Activated CD4-positive, alpha-beta T cell treated with anti-CD3 and anti-CD28 coated beads, Interleukin-2, amount 10 ng/mL, durations not matched to agents 7 days and 5 days (primary cell): ENCODE measurements at regions of chr17 and their contacts with region 1.

Region 1: GRCh38 chr17:80649678-80650672 is 105.3 kb downstream of the RPTOR start:
- DNase-seq: peak; percentile 59
- H3K4me3 Mint-ChIP-seq: peak overlapping the region; percentile 29
- H3K27ac Mint-ChIP-seq: peak overlapping the region; percentile 95
- H3K4me1 Mint-ChIP-seq: peaks cover 71% of the 10 kb centered on the region
- H3K27me3 Mint-ChIP-seq: no peaks in the 10 kb centered on the region

Region 2: DNA sequence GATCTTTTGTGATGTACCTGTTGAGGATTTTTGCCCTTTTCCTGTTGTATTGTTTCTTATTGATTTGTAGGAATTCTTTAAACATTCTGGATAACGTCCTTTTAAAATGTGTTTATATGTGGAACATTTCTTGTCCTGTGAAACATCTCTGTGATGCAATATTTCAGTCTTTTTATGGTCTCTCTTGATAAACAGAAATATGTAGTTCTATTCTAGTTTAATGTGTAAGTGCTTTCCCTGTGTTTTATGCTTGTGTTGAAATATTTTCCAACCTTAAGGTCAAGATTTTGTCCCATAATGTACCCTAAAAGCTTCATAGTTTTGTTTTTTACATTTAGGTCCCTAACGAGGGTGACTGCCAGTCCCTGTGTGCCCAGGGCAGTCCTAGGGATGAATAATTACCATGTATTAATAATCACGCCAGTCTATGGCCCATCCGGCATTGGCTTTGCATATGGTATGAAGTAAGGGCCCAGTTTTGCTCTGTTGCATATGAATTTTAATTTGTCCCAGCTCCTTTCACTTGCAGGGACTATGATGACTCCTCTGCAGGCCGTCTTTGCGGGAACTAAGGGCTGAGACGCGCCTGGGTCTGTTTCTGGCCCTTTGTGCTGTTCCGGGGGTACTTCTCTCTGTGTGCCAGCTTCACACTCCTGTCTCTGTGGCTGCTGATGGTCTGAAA is 61.1 kb before region 1 on chr17:
- CTCF ChIA-PET with region 1: no interaction called
- POLR2A ChIA-PET with region 1: no interaction called
- DNase-seq: no peak
- H3K4me3 Mint-ChIP-seq: no peak overlapping the region
- H3K27ac Mint-ChIP-seq: no peak overlapping the region
- H3K4me1 Mint-ChIP-seq: peaks cover 67% of the 10 kb centered on the region
- H3K27me3 Mint-ChIP-seq: no peaks in the 10 kb centered on the region

Region 3: GRCh38 chr17:80660527-80661198 is 10.7 kb after region 1 on chr17:
- CTCF ChIA-PET with region 1: interaction called, 10 read pairs
- POLR2A ChIA-PET with region 1: no interaction called
- DNase-seq: no peak
- H3K4me3 Mint-ChIP-seq: no peak overlapping the region
- H3K27ac Mint-ChIP-seq: peak overlapping the region; percentile 33
- H3K4me1 Mint-ChIP-seq: peaks cover 48% of the 10 kb centered on the region
- H3K27me3 Mint-ChIP-seq: no peaks in the 10 kb centered on the region

Region 4: GRCh38 chr17:80773243-80773991 is 123.4 kb after region 1 on chr17:
- CTCF ChIA-PET with region 1: no interaction called
- POLR2A ChIA-PET with region 1: no interaction called
- DNase-seq: no peak
- H3K4me3 Mint-ChIP-seq: no peak overlapping the region
- H3K27ac Mint-ChIP-seq: peak overlapping the region; percentile 96
- H3K4me1 Mint-ChIP-seq: peaks cover 88% of the 10 kb centered on the region
- H3K27me3 Mint-ChIP-seq: no peaks in the 10 kb centered on the region